Activated CD4-positive, alpha-beta T cell treated with anti-CD3 and anti-CD28 coated beads, Interleukin-2, amount 10 ng/mL, durations not matched to agents 24 days and 14 days (primary cell): ENCODE measurements at regions of chr2 and their contacts with region 1.

Region 1: GRCh38 chr2:183124222-183124956 is at the start of gene NUP35:
- DNase-seq: peak; percentile 96
- H3K4me3 Mint-ChIP-seq: peak within 1 kb of the TSS; percentile 98
- H3K27ac Mint-ChIP-seq: peak within 1 kb of the TSS; percentile 99
- H3K4me1 Mint-ChIP-seq: peaks cover 27% of the 10 kb centered on the region
- H3K27me3 Mint-ChIP-seq: peaks cover 13% of the 10 kb centered on the region
- total RNA-seq, gene NUP35: 41.5 and 44.0 TPM in 2 replicates

Region 2: DNA sequence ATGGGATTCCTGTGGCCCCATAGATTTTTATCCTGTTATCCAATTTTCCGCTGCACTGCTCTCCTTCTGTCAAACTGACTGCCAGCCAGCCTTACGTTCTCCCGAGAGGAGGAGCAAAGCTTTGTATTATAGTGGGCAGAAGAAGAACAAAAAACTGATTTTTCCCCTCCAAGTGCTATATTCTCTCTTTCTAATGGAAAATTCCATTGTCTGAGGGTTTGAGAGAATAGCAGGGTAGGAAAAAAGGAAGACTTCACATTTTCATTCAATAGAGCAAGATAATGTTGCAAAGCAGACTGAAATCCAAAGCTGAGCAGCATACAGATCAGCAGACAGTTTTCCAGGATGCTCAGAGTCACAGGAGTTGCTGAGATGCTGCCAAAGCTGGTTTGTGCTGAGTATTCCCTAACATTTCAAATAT is 1906.0 kb before region 1 on chr2:
- intact Hi-C with region 1: no loop called
- DNase-seq: no peak
- H3K4me3 Mint-ChIP-seq: no peak overlapping the region
- H3K27ac Mint-ChIP-seq: no peak overlapping the region
- H3K4me1 Mint-ChIP-seq: peaks cover 14% of the 10 kb centered on the region
- H3K27me3 Mint-ChIP-seq: no peaks in the 10 kb centered on the region

Region 3: DNA sequence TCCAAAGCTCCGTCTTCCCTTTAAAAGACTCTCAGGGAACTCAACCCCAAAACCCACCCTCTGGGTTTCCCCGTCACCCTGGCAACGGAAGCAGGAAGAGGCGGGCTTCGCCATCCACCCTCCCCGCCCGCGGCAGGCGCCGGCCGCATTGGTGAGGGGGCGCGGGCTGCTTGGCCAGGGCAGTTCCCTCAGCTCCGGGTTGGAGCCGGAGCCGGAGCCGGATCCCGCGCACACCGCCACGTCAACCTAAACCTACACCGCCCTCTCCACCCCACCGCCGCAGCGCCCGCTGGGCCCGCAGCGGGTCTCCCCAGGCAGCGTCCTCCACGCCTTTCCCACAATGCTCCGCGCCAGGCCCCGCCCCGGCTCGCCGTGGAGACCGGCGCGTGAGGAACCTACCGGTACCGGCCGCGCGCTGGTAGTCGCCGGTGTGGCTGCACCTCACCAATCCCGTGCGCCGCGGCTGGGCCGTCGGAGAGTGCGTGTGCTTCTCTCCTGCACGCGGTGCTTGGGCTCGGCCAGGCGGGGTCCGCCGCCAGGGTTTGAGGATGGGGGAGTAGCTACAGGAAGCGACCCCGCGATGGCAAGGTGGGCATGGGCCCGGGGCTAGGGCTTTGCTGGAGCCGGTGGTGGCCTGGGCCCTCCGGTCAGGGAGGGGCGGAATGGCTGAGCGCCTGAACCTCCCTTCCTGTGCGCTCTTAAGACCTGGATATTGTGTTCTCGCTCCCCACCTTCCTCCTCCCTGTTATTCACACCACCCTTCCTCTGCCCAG is 408.3 kb before region 1 on chr2 and contains the start of gene DNAJC10:
- intact Hi-C with region 1: loop called (anchors 1 kb)
- DNase-seq: peak; percentile 97
- H3K4me3 Mint-ChIP-seq: no peak within 1 kb of the TSS
- H3K27ac Mint-ChIP-seq: no peak within 1 kb of the TSS
- H3K4me1 Mint-ChIP-seq: peaks cover 8% of the 10 kb centered on the region
- H3K27me3 Mint-ChIP-seq: peaks cover 11% of the 10 kb centered on the region
- total RNA-seq, gene DNAJC10: 68.2 and 75.1 TPM in 2 replicates

Region 4: DNA sequence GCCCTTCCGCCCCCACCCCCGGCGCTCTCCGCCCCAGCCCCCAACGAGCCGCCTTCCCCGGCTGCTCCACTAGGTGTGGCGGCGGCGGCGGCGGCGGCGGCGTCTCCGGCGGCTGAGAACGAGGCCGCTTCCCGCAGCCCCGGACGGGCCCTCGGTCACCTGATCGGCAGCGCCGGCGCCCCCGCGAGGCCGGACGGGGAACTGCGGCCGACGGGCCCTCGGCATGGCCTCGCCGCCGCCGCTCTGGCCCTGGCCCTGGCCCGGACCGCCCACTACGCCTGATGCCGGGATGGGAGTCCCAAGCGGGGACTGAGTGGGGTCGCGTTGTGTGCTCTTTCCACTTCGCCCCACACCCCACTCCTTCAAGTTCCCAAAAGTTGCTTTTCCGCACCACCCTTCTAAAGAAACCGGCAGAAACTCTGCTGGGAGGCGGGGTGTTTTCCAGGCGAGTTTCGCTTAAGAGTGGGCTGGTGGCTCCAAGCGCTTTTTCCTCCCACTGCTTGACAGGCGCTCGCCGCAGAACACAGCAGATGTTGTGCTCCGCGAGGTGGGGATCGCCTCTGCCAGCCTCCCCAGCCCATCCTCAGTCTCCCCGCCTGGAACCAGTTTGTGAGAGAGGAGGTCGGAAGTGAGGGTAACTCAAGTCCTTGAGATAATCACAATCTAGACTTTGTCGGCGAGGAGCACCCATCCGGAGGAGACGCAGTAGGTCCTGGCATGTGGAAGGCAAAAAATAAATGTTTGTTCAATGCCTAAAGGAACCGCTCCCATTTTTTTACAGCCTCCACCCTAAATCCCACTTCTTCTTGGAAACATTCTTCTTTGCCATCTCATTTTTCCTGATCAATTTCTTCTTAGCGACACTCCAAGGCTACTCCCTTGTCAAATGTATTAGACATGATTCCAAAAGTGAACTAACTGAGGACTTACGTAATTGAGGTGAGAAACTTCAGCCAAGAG is 85.8 kb before region 1 on chr2 and contains the start of gene NCKAP1:
- intact Hi-C with region 1: loop called (anchors 1 kb)
- DNase-seq: peak; percentile 96
- H3K4me3 Mint-ChIP-seq: peak within 1 kb of the TSS; percentile 85
- H3K27ac Mint-ChIP-seq: peak within 1 kb of the TSS; percentile 66
- H3K4me1 Mint-ChIP-seq: peaks cover 22% of the 10 kb centered on the region
- H3K27me3 Mint-ChIP-seq: peaks cover 72% of the 10 kb centered on the region
- total RNA-seq, gene NCKAP1: 14.5 TPM in 2 replicates

Region 5: GRCh38 chr2:183078465-183079138 is 45.8 kb before region 1 on chr2 and contains the start of gene DUSP19:
- intact Hi-C with region 1: loop called (anchors 1 kb)
- DNase-seq: peak; percentile 95
- H3K4me3 Mint-ChIP-seq: peak within 1 kb of the TSS; percentile 85
- H3K27ac Mint-ChIP-seq: peak within 1 kb of the TSS; percentile 59
- H3K4me1 Mint-ChIP-seq: peaks cover 13% of the 10 kb centered on the region
- H3K27me3 Mint-ChIP-seq: peaks cover 4% of the 10 kb centered on the region
- total RNA-seq, gene DUSP19: 1.0 and 2.3 TPM in 2 replicates